H1 (cell line): ENCODE measurements at regions of chr16 and their contacts with region 1.

Region 1: GRCh38 chr16:82755569-82756282 is 129.0 kb downstream of the CDH13 start:
- DNase-seq: no peak
- H3K4me3 ChIP-seq: no peak overlapping the region
- H3K27ac ChIP-seq: no peak overlapping the region
- H3K4me1 ChIP-seq: peaks cover 0 to 5% (median 2%) of the 10 kb centered on the region in 4 experiments; a peak in 3 of 7 replicates
- H3K27me3 ChIP-seq: no peaks in the 10 kb centered on the region
- CTCF ChIP-seq: peak in 2 of 3 experiments; percentile 31 to 54; a peak in 2 of 4 replicates
- EP300 ChIP-seq: no peak
- POLR2A ChIP-seq: no peak
- RAD21 ChIP-seq: peak; percentile 54 to 65

Region 2: GRCh38 chr16:82744958-82745357 is 10.8 kb before region 1 on chr16:
- CTCF ChIA-PET with region 1: interaction called, 11 read pairs
- POLR2A ChIA-PET with region 1: interaction called, 3 read pairs
- DNase-seq: no peak
- H3K4me3 ChIP-seq: no peak overlapping the region
- H3K27ac ChIP-seq: no peak overlapping the region
- H3K4me1 ChIP-seq: peaks cover 0 to 4% (median 0%) of the 10 kb centered on the region in 4 experiments; a peak in 2 of 7 replicates
- H3K27me3 ChIP-seq: no peaks in the 10 kb centered on the region
- CTCF ChIP-seq: no peak
- EP300 ChIP-seq: no peak
- POLR2A ChIP-seq: no peak
- RAD21 ChIP-seq: no peak